Left ventricle myocardium inferior (tissue), 1 donor: ENCODE measurements at regions of chr1 and their contacts with region 1.

Region 1: GRCh38 chr1:176903474-176903873 is 261.0 kb downstream of the ASTN1 start:
- DNase-seq: no peak
- H3K4me3 ChIP-seq: no peak overlapping the region
- H3K27ac ChIP-seq: no peak overlapping the region
- H3K4me1 ChIP-seq: peaks cover 11% of the 10 kb centered on the region
- H3K27me3 ChIP-seq: peaks cover 64% of the 10 kb centered on the region
- CTCF ChIP-seq: no peak

Region 2: DNA sequence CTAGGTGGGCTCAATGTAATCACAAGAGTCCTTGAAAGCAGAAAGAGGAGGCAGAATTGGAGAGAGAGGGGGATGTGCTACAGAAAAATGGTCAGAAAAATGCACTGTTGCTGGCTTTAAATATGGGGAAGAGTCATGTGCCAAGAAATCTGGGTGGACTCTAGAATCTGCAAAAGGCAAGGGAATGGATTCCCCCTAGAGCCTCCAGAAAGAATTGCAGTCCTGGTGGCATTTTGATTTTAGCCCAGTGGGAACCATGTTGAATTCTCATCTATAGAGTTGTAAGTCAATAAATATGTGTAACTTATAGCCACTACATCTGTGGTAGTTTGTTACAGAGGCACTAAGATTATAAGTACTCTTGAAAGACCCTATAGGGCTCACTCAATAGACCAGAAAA is 50.8 kb after region 1 on chr1:
- intact Hi-C with region 1: loop called (anchors 5 kb)
- DNase-seq: no peak
- H3K4me3 ChIP-seq: no peak overlapping the region
- H3K27ac ChIP-seq: no peak overlapping the region
- H3K4me1 ChIP-seq: no peaks in the 10 kb centered on the region
- H3K27me3 ChIP-seq: peaks cover 16% of the 10 kb centered on the region
- CTCF ChIP-seq: peak; percentile 29